Activated CD8-positive, alpha-beta memory T cell treated with anti-CD3 and anti-CD28 coated beads, Interleukin-2, amount 10 ng/mL, durations not matched to agents 7 days and 5 days (primary cell): ENCODE measurements at regions of chr3 and their contacts with region 1.

Region 1: DNA sequence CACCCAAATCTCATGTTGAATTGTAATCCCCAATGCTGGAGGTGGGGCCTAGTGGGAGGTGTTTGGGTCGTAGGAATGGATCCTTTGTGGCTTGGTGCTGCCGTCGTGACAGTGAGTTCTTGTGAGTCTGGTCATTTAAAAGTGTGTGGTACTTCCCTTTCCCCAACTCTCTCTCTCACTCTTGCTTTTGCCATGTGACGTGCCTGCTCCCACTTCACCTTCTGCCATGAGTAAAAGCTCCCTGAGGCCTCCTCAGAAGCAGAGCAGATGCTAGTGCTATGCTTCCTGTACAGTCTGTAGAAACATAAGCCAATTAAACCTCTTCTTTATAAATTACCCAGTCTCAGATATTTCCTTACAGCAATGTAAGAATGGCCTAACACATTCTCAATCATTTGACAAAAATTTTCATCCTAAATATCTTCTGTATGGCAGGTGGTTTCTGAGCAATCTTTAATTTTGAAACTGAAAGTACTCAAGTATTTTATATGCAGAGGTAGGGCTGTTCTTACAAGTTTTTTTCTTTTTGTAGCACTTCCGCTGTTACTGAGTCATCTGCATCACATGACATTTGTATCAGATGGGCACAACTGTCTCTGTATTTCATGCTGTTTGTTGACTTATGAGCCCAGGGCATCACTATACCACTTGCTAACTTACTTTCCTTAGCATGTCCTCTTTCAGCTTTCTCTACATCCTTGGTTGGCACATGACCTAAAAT is 8.8 kb downstream of the RPL39L start:
- DNase-seq: peak; percentile 59
- ATAC-seq: peak; percentile 99
- H3K4me3 Mint-ChIP-seq: peak overlapping the region; percentile 62
- H3K27ac Mint-ChIP-seq: peak overlapping the region; percentile 93
- H3K4me1 Mint-ChIP-seq: peaks cover 36% of the 10 kb centered on the region
- H3K27me3 Mint-ChIP-seq: no peaks in the 10 kb centered on the region

Region 2: GRCh38 chr3:187051719-187052366 is 78.7 kb before region 1 on chr3:
- CTCF ChIA-PET with region 1: no interaction called
- DNase-seq: no peak
- ATAC-seq: no peak
- H3K4me3 Mint-ChIP-seq: no peak overlapping the region
- H3K27ac Mint-ChIP-seq: no peak overlapping the region
- H3K4me1 Mint-ChIP-seq: peaks cover 27% of the 10 kb centered on the region
- H3K27me3 Mint-ChIP-seq: no peaks in the 10 kb centered on the region

Region 3: GRCh38 chr3:187150599-187150998 is 20.1 kb after region 1 on chr3:
- CTCF ChIA-PET with region 1: interaction called, 20 read pairs
- DNase-seq: peak; percentile 75
- ATAC-seq: peak; percentile 63
- H3K4me3 Mint-ChIP-seq: no peak overlapping the region
- H3K27ac Mint-ChIP-seq: no peak overlapping the region
- H3K4me1 Mint-ChIP-seq: no peaks in the 10 kb centered on the region
- H3K27me3 Mint-ChIP-seq: peaks cover 44% of the 10 kb centered on the region

Region 4: GRCh38 chr3:187181454-187182170 is 51.1 kb after region 1 on chr3:
- CTCF ChIA-PET with region 1: no interaction called
- DNase-seq: no peak
- ATAC-seq: no peak
- H3K4me3 Mint-ChIP-seq: no peak overlapping the region
- H3K27ac Mint-ChIP-seq: no peak overlapping the region
- H3K4me1 Mint-ChIP-seq: peaks cover 12% of the 10 kb centered on the region
- H3K27me3 Mint-ChIP-seq: peaks cover 12% of the 10 kb centered on the region